Activated CD8-positive, alpha-beta T cell treated with anti-CD3 and anti-CD28 coated beads for 36 hours (primary cell): ENCODE measurements at regions of chr16 and their contacts with region 1.

Region 1: GRCh38 chr16:57422026-57422944 is 17.7 kb downstream of the CCL17 start:
- DNase-seq: no peak
- ATAC-seq: no peak
- H3K4me3 Mint-ChIP-seq: no peak overlapping the region
- H3K27ac Mint-ChIP-seq: no peak overlapping the region
- H3K4me1 Mint-ChIP-seq: peaks cover 18% of the 10 kb centered on the region
- H3K27me3 Mint-ChIP-seq: no peaks in the 10 kb centered on the region
- CTCF ChIP-seq: no peak

Region 2: DNA sequence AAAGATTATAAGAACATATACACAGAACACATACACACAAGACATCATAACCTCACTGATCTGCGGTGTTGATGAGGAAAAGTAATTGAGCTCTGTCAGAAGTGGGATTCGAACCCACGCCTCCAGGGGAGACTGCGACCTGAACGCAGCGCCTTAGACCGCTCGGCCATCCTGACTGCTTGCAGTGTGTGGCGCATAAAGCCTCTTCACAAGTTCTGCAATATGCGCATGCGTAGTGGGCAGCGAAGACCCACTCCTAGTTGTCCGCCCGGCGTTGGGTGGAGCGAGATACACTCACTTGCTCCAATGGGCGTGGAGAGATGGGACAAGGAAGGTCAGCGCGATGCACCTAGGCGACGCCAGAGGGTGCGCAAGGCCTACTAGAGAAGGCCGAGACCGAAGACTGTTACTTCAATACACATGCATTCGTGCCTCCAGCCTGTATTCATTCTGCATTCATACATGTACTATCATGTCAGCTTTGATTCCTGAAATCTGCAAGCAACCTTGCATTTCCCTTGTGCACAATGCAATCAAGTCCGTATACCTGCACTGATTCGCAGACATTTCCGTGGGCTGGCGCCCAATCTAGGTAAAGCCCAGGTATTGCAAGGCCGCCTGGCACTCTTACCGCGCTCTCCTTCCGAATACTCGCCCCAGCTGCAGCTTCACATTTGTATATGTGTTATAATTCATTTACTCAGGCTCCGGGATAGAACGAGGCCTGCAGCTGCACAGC is 121.7 kb before region 1 on chr16:
- CTCF ChIA-PET with region 1: interaction called, 258 read pairs
- POLR2A ChIA-PET with region 1: interaction called, 31 read pairs
- intact Hi-C with region 1: loop called (anchors 1 kb)
- DNase-seq: peak; percentile 99
- ATAC-seq: peak; percentile 91
- H3K4me3 Mint-ChIP-seq: no peak overlapping the region
- H3K27ac Mint-ChIP-seq: no peak overlapping the region
- H3K4me1 Mint-ChIP-seq: peaks cover 14% of the 10 kb centered on the region
- H3K27me3 Mint-ChIP-seq: no peaks in the 10 kb centered on the region
- CTCF ChIP-seq: peak; percentile 96

Region 3: GRCh38 chr16:57432989-57433388 is 10.7 kb after region 1 on chr16:
- CTCF ChIA-PET with region 1: interaction called, 81 read pairs
- POLR2A ChIA-PET with region 1: interaction called, 3 read pairs
- intact Hi-C with region 1: no loop called
- DNase-seq: no peak
- ATAC-seq: no peak
- H3K4me3 Mint-ChIP-seq: no peak overlapping the region
- H3K27ac Mint-ChIP-seq: peak overlapping the region; percentile 66
- H3K4me1 Mint-ChIP-seq: peaks cover 29% of the 10 kb centered on the region
- H3K27me3 Mint-ChIP-seq: no peaks in the 10 kb centered on the region
- CTCF ChIP-seq: no peak

Region 4: GRCh38 chr16:57447186-57447962 is 25.1 kb after region 1 on chr16 and contains the starts of genes CIAPIN1 and COQ9:
- CTCF ChIA-PET with region 1: interaction called, 16 read pairs
- POLR2A ChIA-PET with region 1: interaction called, 6 read pairs
- intact Hi-C with region 1: no loop called
- DNase-seq: peak; percentile 95
- ATAC-seq: peak; percentile 99
- H3K4me3 Mint-ChIP-seq: peak within 1 kb of the TSS; percentile 94
- H3K27ac Mint-ChIP-seq: peak within 1 kb of the TSS; percentile 91
- H3K4me1 Mint-ChIP-seq: peaks cover 47% of the 10 kb centered on the region
- H3K27me3 Mint-ChIP-seq: no peaks in the 10 kb centered on the region
- CTCF ChIP-seq: no peak
- total RNA-seq, gene CIAPIN1: 53.3 to 53.4 TPM
- total RNA-seq, gene COQ9: 39.3 to 39.6 TPM

Region 5: DNA sequence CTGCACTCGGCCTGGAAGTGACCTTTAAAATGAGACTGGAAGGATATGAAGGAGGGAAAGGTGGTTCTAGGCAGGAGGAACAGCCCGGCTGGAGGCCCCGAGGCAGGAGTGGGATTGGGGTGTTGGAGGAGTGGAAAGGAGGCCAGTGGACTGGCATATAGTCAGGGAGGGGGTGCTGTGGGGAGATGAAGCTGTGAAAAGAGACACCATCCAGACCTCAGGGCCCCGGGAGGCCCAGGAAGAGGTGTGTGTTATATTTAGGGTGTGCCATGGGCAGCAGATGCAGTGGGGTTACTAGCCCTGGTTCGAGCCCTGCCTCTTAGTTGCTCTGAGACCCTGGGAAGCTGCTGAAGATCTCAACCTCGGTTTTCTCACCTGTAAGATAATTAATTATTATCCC is 82.9 kb after region 1 on chr16:
- CTCF ChIA-PET with region 1: no interaction called
- POLR2A ChIA-PET with region 1: no interaction called
- intact Hi-C with region 1: no loop called
- DNase-seq: no peak
- ATAC-seq: no peak
- H3K4me3 Mint-ChIP-seq: no peak overlapping the region
- H3K27ac Mint-ChIP-seq: no peak overlapping the region
- H3K4me1 Mint-ChIP-seq: peaks cover 11% of the 10 kb centered on the region
- H3K27me3 Mint-ChIP-seq: no peaks in the 10 kb centered on the region
- CTCF ChIP-seq: no peak

Region 6: GRCh38 chr16:57530104-57530521 is 107.8 kb after region 1 on chr16:
- CTCF ChIA-PET with region 1: interaction called, 18 read pairs
- POLR2A ChIA-PET with region 1: no interaction called
- intact Hi-C with region 1: no loop called
- DNase-seq: peak; percentile 91
- ATAC-seq: peak; percentile 96
- H3K4me3 Mint-ChIP-seq: peak overlapping the region; percentile 54
- H3K27ac Mint-ChIP-seq: peak overlapping the region; percentile 96
- H3K4me1 Mint-ChIP-seq: peaks cover 53% of the 10 kb centered on the region
- H3K27me3 Mint-ChIP-seq: no peaks in the 10 kb centered on the region
- CTCF ChIP-seq: no peak

Region 7: DNA sequence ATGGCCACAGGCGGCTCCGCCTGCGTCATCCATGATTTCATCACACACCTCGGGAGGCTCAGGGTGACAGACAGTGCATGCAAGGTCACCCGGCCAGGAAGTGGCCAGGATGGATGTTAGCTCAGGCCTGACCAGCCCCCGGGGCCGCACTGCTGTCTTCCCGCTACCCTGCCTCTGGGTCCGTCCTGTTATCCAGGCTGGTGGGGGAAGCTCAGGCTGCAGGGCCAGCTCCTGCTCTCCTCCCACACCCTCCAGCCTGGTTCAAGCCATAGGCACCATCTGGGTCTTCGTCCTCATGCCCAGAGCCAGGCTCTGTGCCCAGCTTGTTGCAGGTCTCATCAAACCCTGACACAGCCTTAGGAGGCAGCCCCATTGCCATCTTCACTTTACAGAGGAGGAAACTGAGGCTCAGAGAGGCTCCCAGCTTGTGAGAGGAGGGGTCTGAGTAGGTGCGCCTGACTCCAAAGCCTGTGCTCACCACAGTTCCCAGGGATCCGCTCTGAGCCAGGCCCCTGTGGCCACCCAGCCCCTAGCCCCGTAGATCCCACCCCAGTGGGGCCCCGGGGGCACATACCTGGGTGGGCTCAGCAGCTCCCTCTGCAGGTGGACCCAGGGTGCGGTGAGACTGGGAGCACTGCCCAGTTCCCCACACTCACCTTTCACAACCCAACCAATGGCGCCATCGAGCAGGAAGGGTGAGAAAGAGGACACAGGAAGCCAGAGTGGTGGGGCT is 245.4 kb after region 1 on chr16:
- CTCF ChIA-PET with region 1: no interaction called
- POLR2A ChIA-PET with region 1: no interaction called
- intact Hi-C with region 1: no loop called
- DNase-seq: no peak
- ATAC-seq: no peak
- H3K4me3 Mint-ChIP-seq: no peak overlapping the region
- H3K27ac Mint-ChIP-seq: no peak overlapping the region
- H3K4me1 Mint-ChIP-seq: no peaks in the 10 kb centered on the region
- H3K27me3 Mint-ChIP-seq: no peaks in the 10 kb centered on the region
- CTCF ChIP-seq: no peak